ENCODE measurements at regions of chr11 and their contacts with region 1.

Region 1: GRCh38 chr11:109401545-109401944 is 20.4 kb upstream of the C11orf87 start:
- DNase-seq: no peak
- H3K4me3 ChIP-seq: no peak overlapping the region
- H3K27ac ChIP-seq: no peak overlapping the region
- H3K4me1 ChIP-seq: no peaks in the 10 kb centered on the region
- H3K27me3 ChIP-seq: no peaks in the 10 kb centered on the region
- CTCF ChIP-seq: no peak

Region 2: GRCh38 chr11:109426442-109427240 is 25.1 kb after region 1 on chr11:
- CTCF ChIA-PET with region 1: no interaction called
- POLR2A ChIA-PET with region 1: no interaction called
- intact Hi-C with region 1: no loop called
- DNase-seq: no peak
- H3K4me3 ChIP-seq: no peak overlapping the region
- H3K27ac ChIP-seq: no peak overlapping the region
- H3K4me1 ChIP-seq: no peaks in the 10 kb centered on the region
- H3K27me3 ChIP-seq: peaks cover 5% of the 10 kb centered on the region; the same call in 1 of the 2 replicates
- CTCF ChIP-seq: 0 out of 2 replicates have a peak, but pooled peaks have one; percentile 31

Region 3: GRCh38 chr11:109443052-109443451 is 41.5 kb after region 1 on chr11:
- CTCF ChIA-PET with region 1: no interaction called
- POLR2A ChIA-PET with region 1: no interaction called
- intact Hi-C with region 1: loop called (anchors 2 kb)
- DNase-seq: no peak
- H3K4me3 ChIP-seq: no peak overlapping the region
- H3K27ac ChIP-seq: no peak overlapping the region
- H3K4me1 ChIP-seq: no peaks in the 10 kb centered on the region
- H3K27me3 ChIP-seq: no peaks in the 10 kb centered on the region
- CTCF ChIP-seq: no peak

Measured in PC-9 (cell line).